ENCODE measurements at regions of chr21 and their contacts with region 1.

Region 1: DNA sequence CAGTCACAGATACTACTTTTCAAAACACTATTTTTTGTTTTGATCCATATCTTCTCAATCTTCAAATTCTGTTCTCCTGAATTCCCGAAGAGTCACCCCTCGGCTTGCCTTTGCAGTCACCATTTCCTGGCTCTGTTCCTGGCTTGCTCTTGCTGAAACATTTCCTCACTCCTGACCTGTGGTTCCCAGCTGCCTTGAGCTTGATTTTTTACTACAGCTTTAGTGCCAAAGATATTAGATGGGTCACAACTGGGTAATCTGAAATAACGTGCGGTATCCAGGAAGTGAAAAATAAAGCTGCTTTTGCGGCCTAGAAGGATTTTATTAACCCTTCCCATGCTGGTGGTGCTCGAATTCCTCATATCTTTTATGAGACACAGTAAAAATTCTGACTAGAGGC is 318.8 kb downstream of the PCP4 start:
- DNase-seq: no peak
- H3K4me3 ChIP-seq: no peak overlapping the region
- H3K27ac ChIP-seq: no peak overlapping the region
- H3K4me1 ChIP-seq: no peaks in the 10 kb centered on the region
- H3K27me3 ChIP-seq: peaks cover 0 to 8% of the 10 kb centered on the region in 2 donors
- CTCF ChIP-seq: no peak

Region 2: GRCh38 chr21:40244981-40245380 is 58.9 kb after region 1 on chr21:
- intact Hi-C with region 1: loop called (anchors 10 kb)
- DNase-seq: no peak
- H3K4me3 ChIP-seq: no peak overlapping the region
- H3K27ac ChIP-seq: no peak overlapping the region
- H3K4me1 ChIP-seq: no peaks in the 10 kb centered on the region
- H3K27me3 ChIP-seq: no peaks in the 10 kb centered on the region
- CTCF ChIP-seq: no peak

Region 3: GRCh38 chr21:40270047-40270446 is 84.0 kb after region 1 on chr21:
- intact Hi-C with region 1: loop called (anchors 10 kb)
- DNase-seq: no peak
- H3K4me3 ChIP-seq: no peak overlapping the region
- H3K27ac ChIP-seq: no peak overlapping the region
- H3K4me1 ChIP-seq: no peaks in the 10 kb centered on the region
- H3K27me3 ChIP-seq: no peaks in the 10 kb centered on the region
- CTCF ChIP-seq: no peak